Tibial artery (tissue), 4 donors: ENCODE measurements at regions of chr1 and their contacts with region 1.

Region 1: GRCh38 chr1:10430216-10431069 is at the start of gene CENPS:
- DNase-seq: peak; percentile 82 to 92
- H3K4me3 ChIP-seq: peak within 1 kb of the TSS; percentile 59 to 65
- H3K27ac ChIP-seq: peak within 1 kb of the TSS; percentile 55 to 57
- H3K4me1 ChIP-seq: peaks cover 4 to 18% (median 9%) of the 10 kb centered on the region in 4 donors
- H3K27me3 ChIP-seq: no peaks in the 10 kb centered on the region
- CTCF ChIP-seq: peak; percentile 96 to 99

Region 2: GRCh38 chr1:10378081-10378841 is 52.2 kb before region 1 on chr1:
- intact Hi-C with region 1: loop called (anchors 2 kb)
- DNase-seq: peak in 1 of 2 donors; percentile 26
- H3K4me3 ChIP-seq: no peak overlapping the region
- H3K27ac ChIP-seq: peak overlapping the region in 1 of 2 donors; percentile 57
- H3K4me1 ChIP-seq: peaks cover 0 to 12% (median 4%) of the 10 kb centered on the region in 4 donors
- H3K27me3 ChIP-seq: no peaks in the 10 kb centered on the region
- CTCF ChIP-seq: no peak

Region 3: DNA sequence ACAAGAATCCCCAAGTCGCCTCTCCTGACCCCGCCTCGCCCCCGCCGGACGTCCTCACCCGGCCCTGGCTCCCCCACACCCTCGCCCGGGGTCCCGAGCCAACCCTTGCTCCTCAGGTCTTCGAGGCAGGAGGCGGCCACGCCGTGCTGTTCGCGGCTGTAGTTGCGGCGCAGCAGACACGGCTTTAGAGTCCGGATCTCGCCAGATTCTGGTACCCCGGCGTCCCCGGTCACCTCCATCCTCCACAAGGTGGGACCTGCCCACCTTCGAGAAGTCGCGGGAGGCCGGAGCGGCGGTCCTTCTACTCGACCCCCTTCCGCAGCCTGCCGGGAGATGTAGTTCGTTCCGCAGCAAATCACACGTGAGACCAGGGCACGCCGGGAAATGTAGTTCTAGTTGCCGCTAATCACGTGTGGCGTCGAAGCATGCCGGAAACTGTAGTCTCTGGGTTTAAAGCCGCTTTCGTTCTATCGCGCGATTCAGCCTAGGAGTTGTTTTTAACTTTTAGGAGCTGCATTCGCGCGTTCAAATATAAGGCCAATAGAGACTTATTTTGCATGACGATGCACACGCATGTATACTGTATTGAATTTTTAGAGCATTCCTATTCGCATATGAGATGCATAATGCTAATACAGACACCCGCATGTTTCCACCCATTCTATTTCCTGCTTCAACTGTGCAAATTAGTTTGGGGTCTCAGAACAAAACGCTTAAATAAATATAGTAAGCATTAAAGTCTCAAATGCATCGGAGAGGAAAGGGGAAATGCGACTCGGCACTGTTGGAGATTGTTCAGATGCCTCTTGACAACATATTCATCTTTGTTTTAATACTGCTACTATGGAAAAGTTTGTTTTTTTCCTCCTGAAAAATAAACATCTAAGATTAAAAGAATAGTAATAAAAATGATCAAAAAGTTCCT is 42.0 kb after region 1 on chr1 and contains the start of gene DFFA:
- intact Hi-C with region 1: loop called (anchors 2 kb)
- DNase-seq: peak; percentile 95
- H3K4me3 ChIP-seq: peak within 1 kb of the TSS; percentile 68 to 91
- H3K27ac ChIP-seq: peak within 1 kb of the TSS; percentile 76 to 78
- H3K4me1 ChIP-seq: peaks cover 0 to 37% (median 25%) of the 10 kb centered on the region in 4 donors
- H3K27me3 ChIP-seq: no peaks in the 10 kb centered on the region
- CTCF ChIP-seq: no peak

Region 4: DNA sequence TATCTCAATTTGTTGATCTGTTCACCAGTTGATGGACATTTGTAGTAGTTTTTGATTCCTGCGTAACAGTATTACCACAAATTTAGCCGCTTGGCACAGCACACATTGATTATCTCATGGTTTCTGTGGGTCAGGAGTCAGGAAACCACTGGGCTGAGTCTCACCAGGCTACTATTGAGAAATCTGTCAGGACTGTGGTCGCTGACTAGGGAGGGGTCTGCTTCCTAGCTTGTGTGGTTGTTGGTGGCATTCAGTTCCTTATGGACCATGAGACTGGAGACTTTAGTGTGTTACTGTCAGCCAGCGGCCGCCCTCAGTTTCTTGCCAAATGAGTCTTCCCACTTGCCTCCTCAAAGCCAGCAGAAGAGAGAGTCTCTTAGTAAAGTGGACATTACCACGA is 54.1 kb after region 1 on chr1:
- intact Hi-C with region 1: no loop called
- DNase-seq: no peak
- H3K4me3 ChIP-seq: no peak overlapping the region
- H3K27ac ChIP-seq: no peak overlapping the region
- H3K4me1 ChIP-seq: no peaks in the 10 kb centered on the region
- H3K27me3 ChIP-seq: no peaks in the 10 kb centered on the region
- CTCF ChIP-seq: no peak

Region 5: DNA sequence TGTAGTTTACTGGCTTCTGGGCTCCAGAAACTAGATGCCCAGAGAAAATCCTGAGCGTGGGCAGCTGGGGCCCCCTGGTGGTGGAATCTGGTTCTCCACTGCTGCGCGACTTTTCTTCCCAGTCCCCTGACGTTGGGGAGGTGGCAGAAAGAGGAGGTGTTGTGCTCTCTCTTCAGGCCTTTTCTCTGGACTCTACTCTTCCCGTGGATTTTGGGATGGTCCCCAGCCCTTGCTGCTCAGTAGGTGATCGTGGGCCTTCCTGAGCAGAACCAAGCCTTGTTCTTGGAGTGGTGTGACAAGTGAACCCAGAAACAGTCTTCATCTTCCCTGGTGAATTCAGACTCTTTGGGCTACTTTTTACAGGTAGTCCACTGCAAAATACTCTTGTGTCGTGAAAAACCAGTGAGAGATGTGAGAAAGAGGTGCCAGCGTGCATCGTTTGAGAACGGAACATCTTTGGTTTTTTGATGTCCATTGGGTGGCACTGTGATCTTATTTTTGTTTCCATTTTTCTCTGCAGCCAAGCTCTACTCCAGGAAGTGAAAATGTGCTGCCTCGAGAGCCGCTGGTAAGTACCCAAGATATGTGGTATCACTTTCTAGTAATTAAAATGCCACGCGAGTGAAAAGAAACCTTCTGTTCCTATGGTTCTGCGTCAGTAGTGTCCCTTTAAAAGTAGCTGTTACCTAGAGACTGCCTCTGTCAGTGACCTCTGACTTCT is 64.5 kb after region 1 on chr1:
- intact Hi-C with region 1: loop called (anchors 5 kb)
- DNase-seq: peak; percentile 40 to 75
- H3K4me3 ChIP-seq: peak overlapping the region in 1 of 2 donors; percentile 27
- H3K27ac ChIP-seq: no peak overlapping the region
- H3K4me1 ChIP-seq: peaks cover 0 to 16% (median 6%) of the 10 kb centered on the region in 4 donors
- H3K27me3 ChIP-seq: no peaks in the 10 kb centered on the region
- CTCF ChIP-seq: peak; percentile 86 to 89

Region 6: GRCh38 chr1:10796019-10796944 is 365.8 kb after region 1 on chr1 and contains the start of gene CASZ1:
- intact Hi-C with region 1: no loop called
- DNase-seq: peak; percentile 52 to 82
- H3K4me3 ChIP-seq: peak within 1 kb of the TSS; percentile 58 to 75
- H3K27ac ChIP-seq: peak within 1 kb of the TSS; percentile 35 to 52
- H3K4me1 ChIP-seq: peaks cover 0 to 40% (median 33%) of the 10 kb centered on the region in 4 donors
- H3K27me3 ChIP-seq: peaks cover 0 to 54% of the 10 kb centered on the region in 2 donors
- CTCF ChIP-seq: no peak

Region 7: DNA sequence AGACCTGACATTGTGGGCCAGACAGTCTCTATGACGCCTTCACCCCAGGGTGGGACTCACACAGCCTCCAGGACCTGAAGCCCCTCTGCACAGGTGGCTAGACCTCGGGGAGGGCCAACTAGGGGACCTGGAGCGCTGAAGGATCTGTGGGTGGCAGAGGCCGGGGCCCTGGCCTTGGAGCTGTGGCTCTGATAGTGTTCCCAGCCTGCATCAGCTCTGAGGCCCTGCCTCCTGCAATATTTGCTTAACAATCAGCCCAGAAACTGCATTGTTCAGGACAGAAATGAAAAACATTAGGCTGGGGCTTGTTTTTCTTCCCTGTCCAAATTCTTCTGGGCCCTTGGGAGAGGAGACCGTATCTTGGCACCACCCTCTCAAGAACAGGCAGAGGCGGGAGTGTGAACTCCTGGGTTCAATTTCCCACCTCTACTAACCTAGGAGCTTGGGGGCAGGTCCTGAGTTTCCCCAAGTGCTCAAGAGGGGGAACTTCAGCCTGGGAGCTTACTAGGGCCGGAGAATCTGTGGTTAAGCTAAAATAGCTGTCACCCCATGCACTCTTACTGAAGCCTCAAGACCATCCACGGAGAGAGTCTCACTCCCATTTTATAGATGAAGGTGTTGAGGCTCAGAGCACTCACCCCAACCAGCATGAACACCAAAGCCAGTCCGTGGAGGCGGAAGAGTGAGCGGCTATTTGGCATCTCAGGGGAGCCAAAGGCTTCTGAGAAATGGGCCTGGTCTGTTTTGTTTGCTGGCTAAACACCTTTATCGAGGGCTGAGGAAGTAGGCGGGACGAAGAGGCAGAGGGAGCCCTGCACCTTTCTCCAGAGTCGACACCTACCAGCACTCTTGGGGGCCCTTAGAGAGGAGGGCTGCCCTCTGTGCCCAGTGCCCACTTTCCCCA is 384.8 kb after region 1 on chr1:
- intact Hi-C with region 1: no loop called
- DNase-seq: no peak
- H3K4me3 ChIP-seq: no peak overlapping the region
- H3K27ac ChIP-seq: no peak overlapping the region
- H3K4me1 ChIP-seq: no peaks in the 10 kb centered on the region
- H3K27me3 ChIP-seq: peaks cover 0 to 38% of the 10 kb centered on the region in 2 donors
- CTCF ChIP-seq: no peak